HepG2 (cell line): ENCODE measurements at regions of chr2 and their contacts with region 1.

Region 1: GRCh38 chr2:42047488-42048298 is at the start of gene PKDCC:
- DNase-seq: peak; percentile 75
- ATAC-seq: peak; percentile 72
- H3K4me3 ChIP-seq: peak within 1 kb of the TSS; percentile 82 to 95 (median 90)
- H3K27ac ChIP-seq: peak within 1 kb of the TSS; percentile 51
- H3K4me1 ChIP-seq: peaks cover 67% of the 10 kb centered on the region
- H3K27me3 ChIP-seq: peaks cover 0 to 37% of the 10 kb centered on the region in 2 experiments; a peak in 2 of 5 replicates
- CTCF ChIP-seq: no peak
- EP300 ChIP-seq: no peak
- POLR2A ChIP-seq: 0 out of 4 replicates have a peak, but pooled peaks of 1 of the 2 experiments have one; percentile 22
- RAD21 ChIP-seq: peak; percentile 33; the same call in 1 of the 2 replicates
- total RNA-seq, gene PKDCC: 28.5 and 52.6 TPM in 2 replicates

Region 2: GRCh38 chr2:41847744-41848441 is 199.8 kb before region 1 on chr2:
- CTCF ChIA-PET with region 1: no interaction called
- POLR2A ChIA-PET with region 1: interaction called, 24 read pairs
- in situ Hi-C with region 1: no loop called
- intact Hi-C with region 1: no loop called
- DNase-seq: peak; percentile 96
- ATAC-seq: peak; percentile 89
- H3K4me3 ChIP-seq: no peak overlapping the region
- H3K27ac ChIP-seq: peak overlapping the region; percentile 60
- H3K4me1 ChIP-seq: peaks cover 51% of the 10 kb centered on the region
- H3K27me3 ChIP-seq: no peaks in the 10 kb centered on the region; a peak in 1 of 5 replicates
- CTCF ChIP-seq: no peak
- EP300 ChIP-seq: peak; percentile 99 to 100
- POLR2A ChIP-seq: no peak
- RAD21 ChIP-seq: no peak

Region 3: GRCh38 chr2:41967476-41968181 is 80.1 kb before region 1 on chr2:
- CTCF ChIA-PET with region 1: no interaction called
- POLR2A ChIA-PET with region 1: interaction called, 3 read pairs
- in situ Hi-C with region 1: no loop called
- intact Hi-C with region 1: loop called (anchors 2 kb)
- DNase-seq: no peak
- ATAC-seq: no peak
- H3K4me3 ChIP-seq: no peak overlapping the region
- H3K27ac ChIP-seq: no peak overlapping the region
- H3K4me1 ChIP-seq: peaks cover 45% of the 10 kb centered on the region
- H3K27me3 ChIP-seq: peaks cover 6 to 54% of the 10 kb centered on the region in 2 experiments
- CTCF ChIP-seq: no peak
- EP300 ChIP-seq: no peak
- POLR2A ChIP-seq: no peak
- RAD21 ChIP-seq: no peak

Region 4: GRCh38 chr2:42072349-42073118 is 24.8 kb after region 1 on chr2:
- CTCF ChIA-PET with region 1: no interaction called
- POLR2A ChIA-PET with region 1: interaction called, 11 read pairs
- in situ Hi-C with region 1: no loop called
- intact Hi-C with region 1: no loop called
- DNase-seq: peak; percentile 54
- ATAC-seq: peak; percentile 78
- H3K4me3 ChIP-seq: no peak overlapping the region
- H3K27ac ChIP-seq: no peak overlapping the region
- H3K4me1 ChIP-seq: peaks cover 28% of the 10 kb centered on the region
- H3K27me3 ChIP-seq: peaks cover 2 to 38% of the 10 kb centered on the region in 2 experiments; a peak in 3 of 5 replicates
- CTCF ChIP-seq: peak; percentile 61
- EP300 ChIP-seq: no peak
- POLR2A ChIP-seq: no peak
- RAD21 ChIP-seq: 0 out of 2 replicates have a peak, but pooled peaks have one; percentile 47

Region 5: DNA sequence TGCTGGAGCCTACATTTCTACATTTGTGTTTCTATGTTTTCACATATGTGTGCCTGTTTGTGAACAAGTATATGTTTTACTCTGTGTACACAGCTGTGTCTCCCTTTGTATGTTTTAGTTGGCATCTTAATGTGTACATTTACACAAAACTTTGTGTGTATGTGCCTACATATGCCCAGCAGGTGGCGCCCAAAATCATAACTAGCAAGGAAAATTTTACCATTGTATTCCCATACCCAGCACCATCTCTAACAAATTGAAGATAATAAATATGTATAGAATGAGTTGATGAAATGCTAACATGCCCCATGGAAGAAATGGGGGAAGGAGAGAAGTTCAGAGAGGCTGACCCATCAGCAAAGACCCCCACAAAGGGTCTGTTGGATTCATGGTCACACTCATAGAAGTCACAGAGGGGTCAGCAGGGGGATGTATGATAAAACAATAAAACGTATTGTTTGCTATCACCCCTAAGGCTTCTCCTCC is 48.3 kb after region 1 on chr2:
- CTCF ChIA-PET with region 1: no interaction called
- POLR2A ChIA-PET with region 1: interaction called, 11 read pairs
- in situ Hi-C with region 1: no loop called
- intact Hi-C with region 1: no loop called
- DNase-seq: peak; percentile 81
- ATAC-seq: peak; percentile 20
- H3K4me3 ChIP-seq: no peak overlapping the region
- H3K27ac ChIP-seq: peak overlapping the region; percentile 1
- H3K4me1 ChIP-seq: peaks cover 86% of the 10 kb centered on the region
- H3K27me3 ChIP-seq: no peaks in the 10 kb centered on the region
- CTCF ChIP-seq: peak; percentile 88
- EP300 ChIP-seq: 0 out of 4 replicates have a peak, but pooled peaks of 1 of the 2 experiments have one; percentile 58
- POLR2A ChIP-seq: no peak
- RAD21 ChIP-seq: peak; percentile 88